AG04449 (cell line): ENCODE measurements at regions of chr18 and their contacts with region 1.

Region 1: DNA sequence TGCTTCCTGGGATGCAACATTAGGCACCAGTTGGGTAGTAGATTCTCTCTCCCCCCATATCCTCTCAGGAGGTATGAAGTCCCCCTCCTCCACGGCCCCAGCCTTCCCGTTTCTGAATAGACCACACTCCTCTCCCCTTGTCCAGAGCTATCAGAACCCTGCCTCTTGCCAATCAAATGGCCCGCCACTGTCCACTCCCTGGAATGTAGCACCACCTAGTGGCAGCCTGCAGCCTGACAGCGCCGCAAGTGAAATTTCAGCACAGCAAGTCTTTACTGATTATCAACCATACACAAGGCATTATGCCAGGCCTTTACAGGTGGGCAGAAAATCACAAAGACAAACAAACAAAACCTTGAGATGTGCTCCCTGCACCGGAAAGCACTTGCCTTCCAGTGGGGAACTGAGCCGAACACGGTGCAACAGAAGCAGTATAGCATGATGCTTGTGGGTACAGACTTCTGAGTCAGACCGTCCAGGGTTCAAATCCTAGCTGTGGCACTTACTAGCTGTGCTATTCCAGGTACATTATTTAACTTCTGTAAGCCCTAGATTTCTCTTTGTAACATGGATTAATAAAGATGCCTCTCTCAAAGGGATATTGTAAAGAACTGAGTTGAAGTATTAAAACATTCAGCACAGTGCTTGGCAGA is 174.0 kb downstream of the SMAD2 start:
- DNase-seq: no peak
- H3K4me3 ChIP-seq: no peak overlapping the region
- CTCF ChIP-seq: peak; percentile 89

Region 2: GRCh38 chr18:47100214-47100831 is 656.2 kb before region 1 on chr18:
- CTCF ChIA-PET with region 1: interaction called, 19 read pairs
- POLR2A ChIA-PET with region 1: no interaction called
- DNase-seq: no peak
- H3K4me3 ChIP-seq: no peak overlapping the region
- CTCF ChIP-seq: peak; percentile 75

Region 3: DNA sequence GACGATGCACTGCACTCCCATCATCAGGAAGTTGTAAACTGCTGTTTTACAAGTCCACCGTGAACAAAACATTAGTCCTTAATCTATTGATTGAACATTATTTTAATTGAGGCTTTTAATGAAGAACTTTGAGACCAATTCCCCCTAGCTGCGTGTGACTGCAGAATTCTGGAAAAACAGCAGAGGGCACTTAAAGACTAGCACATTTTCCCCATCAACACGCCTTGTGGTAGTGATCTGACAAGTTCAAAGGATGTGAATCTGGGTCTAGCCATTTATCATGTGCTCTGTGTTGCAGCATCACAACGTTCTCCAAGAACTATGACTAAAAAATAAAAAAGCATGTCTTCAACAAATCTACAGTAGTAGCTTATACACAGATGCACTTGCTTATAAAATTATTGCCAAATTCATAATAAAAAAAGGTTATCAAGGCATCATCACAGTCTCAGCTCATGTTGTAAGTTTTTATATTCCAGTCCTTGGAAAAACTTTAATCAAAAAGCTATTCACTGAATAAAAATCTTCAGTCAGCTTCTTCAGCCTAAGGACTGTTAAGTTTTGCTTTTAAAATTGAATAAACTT is 540.8 kb before region 1 on chr18:
- CTCF ChIA-PET with region 1: interaction called, 165 read pairs
- POLR2A ChIA-PET with region 1: no interaction called
- DNase-seq: peak; percentile 33
- H3K4me3 ChIP-seq: no peak overlapping the region
- CTCF ChIP-seq: peak; percentile 58

Region 4: GRCh38 chr18:47737956-47738355 is 18.5 kb before region 1 on chr18:
- CTCF ChIA-PET with region 1: interaction called, 13 read pairs
- POLR2A ChIA-PET with region 1: no interaction called
- DNase-seq: no peak
- H3K4me3 ChIP-seq: no peak overlapping the region
- CTCF ChIP-seq: no peak

Region 5: GRCh38 chr18:47772374-47773248 is 16.1 kb after region 1 on chr18:
- CTCF ChIA-PET with region 1: interaction called, 14 read pairs
- POLR2A ChIA-PET with region 1: no interaction called
- DNase-seq: peak; percentile 4
- H3K4me3 ChIP-seq: no peak overlapping the region
- CTCF ChIP-seq: peak; percentile 86